Breast epithelium (tissue), 4 donors: ENCODE measurements at regions of chr6 and their contacts with region 1.

Region 1: DNA sequence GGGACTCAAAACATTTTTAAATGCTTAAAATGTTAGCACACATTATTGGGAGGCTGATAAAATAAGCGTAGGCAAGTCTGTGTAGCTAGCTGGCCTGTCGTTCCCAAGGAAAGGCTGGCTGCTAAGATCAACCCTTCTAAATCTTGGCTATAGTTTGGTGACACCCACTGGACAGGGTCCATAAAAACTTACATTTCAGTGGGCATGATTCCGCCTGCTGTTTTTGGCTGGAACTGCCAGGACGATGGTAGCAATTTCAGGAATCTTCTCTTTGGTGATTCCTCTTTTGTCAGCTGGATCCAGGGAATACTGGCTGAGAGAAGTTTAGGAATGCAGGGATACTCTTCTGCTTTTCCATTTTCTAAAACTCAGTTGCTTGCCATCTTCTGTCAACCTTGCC is 162.2 kb downstream of the NKAIN2 start:
- DNase-seq: no peak
- H3K4me3 ChIP-seq: no peak overlapping the region
- H3K27ac ChIP-seq: no peak overlapping the region
- H3K4me1 ChIP-seq: no peaks in the 10 kb centered on the region
- H3K27me3 ChIP-seq: no peaks in the 10 kb centered on the region
- CTCF ChIP-seq: peak in 1 of 3 donors; percentile 19
- POLR2A ChIP-seq: no peak

Region 2: GRCh38 chr6:123224077-123224476 is 741.8 kb before region 1 on chr6:
- intact Hi-C with region 1: loop called (anchors 5 kb)
- DNase-seq: no peak
- H3K4me3 ChIP-seq: no peak overlapping the region
- H3K27ac ChIP-seq: no peak overlapping the region
- H3K4me1 ChIP-seq: no peaks in the 10 kb centered on the region
- H3K27me3 ChIP-seq: no peaks in the 10 kb centered on the region
- CTCF ChIP-seq: no peak
- POLR2A ChIP-seq: no peak